Heart right ventricle (tissue), 16 donors: ENCODE measurements at regions of chr17 and their contacts with region 1.

Region 1: GRCh38 chr17:27353461-27354050 is 59.6 kb downstream of the WSB1 start:
- DNase-seq: peak; percentile 94 to 96
- ATAC-seq: peak; percentile 93 to 97 (median 97)
- H3K4me3 ChIP-seq: peak overlapping the region; percentile 49 to 75 (median 61)
- H3K27ac ChIP-seq: peak overlapping the region; percentile 82 to 98 (median 93)
- H3K4me1 ChIP-seq: peaks cover 9 to 42% (median 27%) of the 10 kb centered on the region in 9 donors
- H3K27me3 ChIP-seq: no peaks in the 10 kb centered on the region
- CTCF ChIP-seq: peak; percentile 85 to 99 (median 98)

Region 2: GRCh38 chr17:27245230-27245696 is 108.3 kb before region 1 on chr17:
- intact Hi-C with region 1: loop called in 5 of 10 experiments (anchors 2 to 5 kb)
- DNase-seq: peak; percentile 87 to 89
- ATAC-seq: peak; percentile 91 to 97 (median 94)
- H3K4me3 ChIP-seq: peak overlapping the region in 6 of 10 donors; percentile 7 to 30 (median 22)
- H3K27ac ChIP-seq: peak overlapping the region; percentile 77 to 94 (median 84)
- H3K4me1 ChIP-seq: peaks cover 12 to 75% (median 46%) of the 10 kb centered on the region in 9 donors
- H3K27me3 ChIP-seq: no peaks in the 10 kb centered on the region
- CTCF ChIP-seq: peak; percentile 43 to 93 (median 81)

Region 3: DNA sequence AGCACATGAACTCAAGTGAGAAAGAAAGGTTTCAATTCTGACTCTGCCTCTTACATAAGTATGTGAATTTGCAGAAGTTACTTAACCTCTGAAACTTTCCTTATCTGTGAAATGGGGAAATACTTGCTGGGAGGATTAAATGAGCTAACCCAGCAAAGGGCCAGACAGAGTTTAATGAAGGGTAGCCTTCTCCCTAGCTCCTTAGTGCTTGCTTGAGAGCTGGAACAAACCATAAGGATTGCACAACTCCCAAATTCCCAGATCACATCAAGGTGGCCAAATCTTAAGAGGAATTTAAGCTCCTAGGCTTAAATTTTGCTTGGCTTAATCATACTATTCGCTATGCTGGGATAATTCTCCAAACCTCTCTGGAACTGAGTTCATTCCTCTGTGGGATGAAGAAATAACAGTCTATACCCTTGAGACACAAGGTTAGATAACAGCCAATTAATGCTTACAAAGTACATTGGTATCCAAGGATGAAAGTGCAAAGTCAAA is 71.5 kb before region 1 on chr17:
- intact Hi-C with region 1: no loop called
- DNase-seq: no peak
- ATAC-seq: peak in 7 of 8 donors; percentile 46 to 93 (median 76)
- H3K4me3 ChIP-seq: no peak overlapping the region
- H3K27ac ChIP-seq: peak overlapping the region in 4 of 10 donors; percentile 8 to 82 (median 34)
- H3K4me1 ChIP-seq: peaks cover 0 to 80% (median 12%) of the 10 kb centered on the region in 9 donors
- H3K27me3 ChIP-seq: no peaks in the 10 kb centered on the region
- CTCF ChIP-seq: no peak

Region 4: GRCh38 chr17:27381007-27381501 is 27.5 kb after region 1 on chr17:
- intact Hi-C with region 1: loop called in 5 of 10 experiments (anchors 1 to 2 kb)
- DNase-seq: peak; percentile 70 to 81
- ATAC-seq: peak; percentile 40 to 84 (median 70)
- H3K4me3 ChIP-seq: peak overlapping the region in 1 of 10 donors; percentile 43
- H3K27ac ChIP-seq: peak overlapping the region in 1 of 10 donors; percentile 40
- H3K4me1 ChIP-seq: peaks cover 3 to 34% (median 28%) of the 10 kb centered on the region in 9 donors
- H3K27me3 ChIP-seq: no peaks in the 10 kb centered on the region
- CTCF ChIP-seq: peak; percentile 73 to 98 (median 88)

Region 5: DNA sequence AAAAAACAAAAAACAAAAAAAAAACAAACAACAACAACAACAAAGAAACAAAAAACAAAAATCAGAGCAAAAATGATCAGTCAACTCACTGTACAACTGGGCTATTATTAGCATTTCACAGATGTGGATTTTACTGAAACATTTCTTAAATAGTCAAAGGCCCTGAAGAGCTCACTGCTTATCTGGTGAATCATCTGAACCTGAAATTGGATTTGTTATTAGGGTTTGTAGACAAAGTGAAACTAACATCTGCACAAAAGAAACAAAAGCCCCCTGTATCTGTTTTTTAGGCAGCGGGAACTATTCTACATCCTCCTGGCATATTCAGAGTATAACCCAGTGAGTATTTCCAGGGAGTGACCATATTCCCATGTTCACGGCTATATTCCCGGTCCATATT is 70.1 kb after region 1 on chr17:
- intact Hi-C with region 1: loop called in 1 of 10 experiments (anchors 10 kb)
- DNase-seq: no peak
- ATAC-seq: no peak
- H3K4me3 ChIP-seq: no peak overlapping the region
- H3K27ac ChIP-seq: no peak overlapping the region
- H3K4me1 ChIP-seq: no peaks in the 10 kb centered on the region
- H3K27me3 ChIP-seq: no peaks in the 10 kb centered on the region
- CTCF ChIP-seq: no peak

Region 6: GRCh38 chr17:27455914-27456680 is 102.5 kb after region 1 on chr17 and contains the start of gene KSR1:
- intact Hi-C with region 1: loop called in 4 of 10 experiments (anchors 2 to 10 kb)
- DNase-seq: peak; percentile 72 to 82
- ATAC-seq: peak; percentile 86 to 97 (median 93)
- H3K4me3 ChIP-seq: peak within 1 kb of the TSS; percentile 45 to 91 (median 88)
- H3K27ac ChIP-seq: peak within 1 kb of the TSS; percentile 32 to 88 (median 80)
- H3K4me1 ChIP-seq: peaks cover 8 to 35% (median 23%) of the 10 kb centered on the region in 9 donors
- H3K27me3 ChIP-seq: no peaks in the 10 kb centered on the region
- CTCF ChIP-seq: peak in 8 of 9 donors; percentile 22 to 74 (median 53)
- total RNA-seq, gene KSR1: 5.6 to 19.6 (median 8.6) TPM

Region 7: GRCh38 chr17:27494192-27495091 is 140.9 kb after region 1 on chr17:
- intact Hi-C with region 1: loop called in 1 of 10 experiments (anchors 10 kb)
- DNase-seq: peak; percentile 23 to 63
- ATAC-seq: peak; percentile 49 to 87 (median 70)
- H3K4me3 ChIP-seq: no peak overlapping the region
- H3K27ac ChIP-seq: peak overlapping the region in 4 of 10 donors; percentile 14 to 73 (median 23)
- H3K4me1 ChIP-seq: peaks cover under 1 to 42% (median 30%) of the 10 kb centered on the region in 9 donors
- H3K27me3 ChIP-seq: no peaks in the 10 kb centered on the region
- CTCF ChIP-seq: peak in 7 of 9 donors; percentile 26 to 61 (median 43)

Region 8: GRCh38 chr17:27552469-27552779 is 198.9 kb after region 1 on chr17:
- intact Hi-C with region 1: no loop called
- DNase-seq: no peak
- ATAC-seq: no peak
- H3K4me3 ChIP-seq: no peak overlapping the region
- H3K27ac ChIP-seq: no peak overlapping the region
- H3K4me1 ChIP-seq: peaks cover 2 to 46% (median 18%) of the 10 kb centered on the region in 9 donors
- H3K27me3 ChIP-seq: no peaks in the 10 kb centered on the region
- CTCF ChIP-seq: no peak